ENCODE measurements at regions of chr9 and their contacts with region 1.

Region 1: DNA sequence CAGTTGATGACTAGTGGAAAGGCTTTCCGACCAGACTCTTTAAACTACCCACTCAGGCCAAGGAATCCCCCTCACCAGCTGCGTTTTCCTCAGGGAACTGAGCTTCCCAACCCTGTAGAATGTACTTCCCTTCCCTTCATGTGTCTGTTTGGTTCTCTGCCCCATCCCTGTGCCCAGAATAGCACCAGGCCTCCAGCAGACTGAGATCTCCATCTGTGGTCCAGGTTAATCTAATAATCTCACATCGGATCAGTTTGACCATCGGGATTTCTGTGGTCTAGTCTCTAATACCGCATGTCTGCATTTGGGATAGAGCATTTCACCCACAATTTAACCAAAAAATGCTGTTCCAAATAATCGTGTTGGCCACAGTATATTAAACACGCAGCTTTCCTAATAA is 237.2 kb downstream of the ROR2 start:
- DNase-seq: no peak
- H3K4me3 ChIP-seq: no peak overlapping the region
- H3K27ac ChIP-seq: no peak overlapping the region
- H3K27me3 ChIP-seq: no peaks in the 10 kb centered on the region
- CTCF ChIP-seq: no peak

Region 2: GRCh38 chr9:91698266-91698665 is 14.5 kb before region 1 on chr9:
- CTCF ChIA-PET with region 1: no interaction called
- POLR2A ChIA-PET with region 1: interaction called, 11 read pairs
- DNase-seq: no peak
- H3K4me3 ChIP-seq: no peak overlapping the region
- H3K27ac ChIP-seq: no peak overlapping the region
- H3K27me3 ChIP-seq: no peaks in the 10 kb centered on the region
- CTCF ChIP-seq: no peak

Region 3: GRCh38 chr9:91727316-91727861 is 14.6 kb after region 1 on chr9:
- CTCF ChIA-PET with region 1: interaction called, 11 read pairs
- POLR2A ChIA-PET with region 1: no interaction called
- DNase-seq: peak; percentile 26
- H3K4me3 ChIP-seq: no peak overlapping the region
- H3K27ac ChIP-seq: no peak overlapping the region
- H3K27me3 ChIP-seq: no peaks in the 10 kb centered on the region
- CTCF ChIP-seq: peak; percentile 73

Region 4: GRCh38 chr9:91758491-91758981 is 45.7 kb after region 1 on chr9:
- CTCF ChIA-PET with region 1: no interaction called
- POLR2A ChIA-PET with region 1: no interaction called
- DNase-seq: no peak
- H3K4me3 ChIP-seq: no peak overlapping the region
- H3K27ac ChIP-seq: no peak overlapping the region
- H3K27me3 ChIP-seq: no peaks in the 10 kb centered on the region
- CTCF ChIP-seq: peak; percentile 80

Measured in AG04450 (cell line).